H1 (cell line): ENCODE measurements at regions of chr20 and their contacts with region 1.

Region 1: DNA sequence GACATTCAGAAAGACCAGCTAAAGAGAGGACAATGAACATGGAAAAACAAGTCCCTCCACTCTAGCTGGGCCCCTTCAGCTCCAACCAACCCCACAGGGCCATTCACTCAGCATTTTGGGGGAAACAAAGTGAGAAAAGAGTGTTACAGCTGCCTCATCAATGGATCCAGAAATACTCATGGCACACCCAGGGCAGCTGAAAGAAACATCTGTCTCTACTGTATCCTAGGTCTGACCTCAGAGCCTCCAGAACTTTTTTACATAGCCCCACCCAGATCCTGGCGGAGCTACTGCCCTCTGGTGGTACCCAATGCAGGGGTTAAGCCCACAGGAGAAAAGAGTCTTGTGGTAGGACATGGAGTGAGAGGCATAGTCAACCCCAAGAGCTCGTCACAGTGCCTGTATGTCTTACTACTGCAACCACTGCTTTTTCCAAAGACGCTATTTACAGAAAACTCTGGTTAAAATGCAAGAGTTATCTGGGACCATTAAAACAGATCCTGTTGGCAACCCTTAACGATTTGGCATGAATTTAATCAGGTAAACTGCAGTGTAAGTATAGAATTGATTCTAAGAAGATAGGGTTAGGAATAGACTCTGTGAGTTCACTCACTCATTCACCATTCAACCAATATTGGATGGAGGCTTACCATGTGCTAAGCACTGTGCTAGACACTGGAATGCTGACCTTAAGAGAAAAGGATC is 37.4 kb upstream of the FAM83C start:
- DNase-seq: peak in 1 of 2 experiments; percentile 89
- H3K4me3 ChIP-seq: no peak overlapping the region
- H3K27ac ChIP-seq: no peak overlapping the region
- H3K4me1 ChIP-seq: peaks cover 0 to 4% (median 1%) of the 10 kb centered on the region in 4 experiments; a peak in 2 of 7 replicates
- H3K27me3 ChIP-seq: no peaks in the 10 kb centered on the region
- CTCF ChIP-seq: peak; percentile 80 to 93 (median 91)
- EP300 ChIP-seq: no peak
- POLR2A ChIP-seq: no peak
- RAD21 ChIP-seq: peak; percentile 47 to 72

Region 2: GRCh38 chr20:35318502-35319157 is 11.0 kb before region 1 on chr20:
- CTCF ChIA-PET with region 1: interaction called, 20 read pairs
- POLR2A ChIA-PET with region 1: interaction called, 5 read pairs
- DNase-seq: no peak
- H3K4me3 ChIP-seq: no peak overlapping the region
- H3K27ac ChIP-seq: no peak overlapping the region
- H3K4me1 ChIP-seq: peaks cover 3 to 9% (median 3%) of the 10 kb centered on the region in 4 experiments; a peak in 6 of 7 replicates
- H3K27me3 ChIP-seq: no peaks in the 10 kb centered on the region; a peak in 2 of 7 replicates
- CTCF ChIP-seq: no peak
- EP300 ChIP-seq: no peak
- POLR2A ChIP-seq: no peak
- RAD21 ChIP-seq: no peak

Region 3: DNA sequence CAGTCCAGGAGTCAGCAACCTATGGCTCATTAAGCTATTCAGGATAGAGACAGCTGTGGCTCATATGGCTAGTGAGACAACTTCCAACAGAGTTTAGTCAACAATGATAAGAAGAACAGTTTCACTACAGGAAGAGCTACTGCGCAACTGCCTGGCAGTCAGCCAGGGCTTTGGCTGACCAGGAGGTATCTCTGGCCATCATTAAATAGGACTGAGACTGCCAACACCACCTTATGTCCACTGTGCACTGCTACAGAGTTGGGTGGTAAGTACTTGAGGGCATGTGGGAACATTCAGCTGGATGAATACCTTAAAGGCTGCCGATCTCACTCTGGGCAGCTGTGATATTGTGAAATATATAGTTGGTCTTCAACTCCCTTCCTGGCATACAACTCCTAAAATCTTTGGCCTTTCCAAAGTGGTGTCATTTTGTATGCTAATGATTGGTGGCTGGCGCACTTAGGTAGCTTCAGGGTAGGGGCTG is 14.8 kb after region 1 on chr20:
- CTCF ChIA-PET with region 1: interaction called, 13 read pairs
- POLR2A ChIA-PET with region 1: no interaction called
- DNase-seq: no peak
- H3K4me3 ChIP-seq: no peak overlapping the region
- H3K27ac ChIP-seq: no peak overlapping the region
- H3K4me1 ChIP-seq: no peaks in the 10 kb centered on the region
- H3K27me3 ChIP-seq: no peaks in the 10 kb centered on the region
- CTCF ChIP-seq: no peak
- EP300 ChIP-seq: no peak
- POLR2A ChIP-seq: no peak
- RAD21 ChIP-seq: no peak

Region 4: GRCh38 chr20:35437491-35437998 is 108.0 kb after region 1 on chr20:
- CTCF ChIA-PET with region 1: interaction called, 12 read pairs
- POLR2A ChIA-PET with region 1: no interaction called
- DNase-seq: no peak
- H3K4me3 ChIP-seq: no peak overlapping the region
- H3K27ac ChIP-seq: no peak overlapping the region
- H3K4me1 ChIP-seq: peaks cover 5 to 21% (median 12%) of the 10 kb centered on the region in 4 experiments
- H3K27me3 ChIP-seq: no peaks in the 10 kb centered on the region
- CTCF ChIP-seq: no peak
- EP300 ChIP-seq: no peak
- POLR2A ChIP-seq: no peak
- RAD21 ChIP-seq: no peak

Region 5: DNA sequence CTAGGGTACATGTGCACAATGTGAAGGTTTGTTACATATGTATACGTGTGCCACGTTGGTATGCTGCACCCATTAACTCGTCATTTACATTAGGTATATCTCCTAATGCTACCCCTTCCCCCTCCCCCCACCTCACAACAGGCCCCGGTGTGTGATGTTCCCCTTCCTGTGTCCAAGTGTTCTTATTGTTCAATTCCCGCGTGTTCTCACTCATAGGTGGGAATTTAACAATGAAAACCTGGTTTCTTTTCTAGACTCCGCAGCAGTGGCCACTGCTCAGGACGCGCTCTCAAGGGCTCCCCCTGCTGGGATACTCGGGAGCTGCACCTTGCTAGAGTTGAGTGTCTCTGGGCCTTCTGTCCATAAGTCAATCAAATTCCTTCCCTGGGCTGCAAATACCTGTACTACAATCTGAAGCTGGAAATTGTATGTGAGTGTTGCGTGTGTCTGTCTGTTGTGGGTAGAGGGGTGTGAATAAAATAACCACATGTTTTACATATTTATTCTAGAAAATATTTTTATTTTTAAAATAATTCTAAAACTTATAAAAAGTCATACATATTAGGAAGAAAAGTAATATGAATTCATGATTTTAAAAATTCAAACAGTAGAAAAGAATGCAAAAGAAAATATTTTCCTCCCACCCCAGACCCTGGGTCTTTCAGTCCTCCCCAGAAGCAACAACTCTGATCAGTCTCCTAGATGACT is 117.6 kb after region 1 on chr20:
- CTCF ChIA-PET with region 1: interaction called, 16 read pairs
- POLR2A ChIA-PET with region 1: no interaction called
- DNase-seq: peak; percentile 69 to 100
- H3K4me3 ChIP-seq: peak overlapping the region in 1 of 4 experiments; percentile 54; a peak in 3 of 8 replicates
- H3K27ac ChIP-seq: no peak overlapping the region
- H3K4me1 ChIP-seq: peaks cover 0 to 3% (median 0%) of the 10 kb centered on the region in 4 experiments; a peak in 1 of 7 replicates
- H3K27me3 ChIP-seq: no peaks in the 10 kb centered on the region
- CTCF ChIP-seq: peak; percentile 79 to 89 (median 87)
- EP300 ChIP-seq: no peak
- POLR2A ChIP-seq: no peak
- RAD21 ChIP-seq: peak; percentile 41 to 65